PC-9 (cell line): ENCODE measurements at regions of chr16 and their contacts with region 1.

Region 1: GRCh38 chr16:27639561-27640276 is 89.8 kb downstream of the KATNIP start:
- DNase-seq: peak in 1 of 2 experiments; percentile 23
- H3K4me3 ChIP-seq: no peak overlapping the region
- H3K27ac ChIP-seq: no peak overlapping the region
- H3K4me1 ChIP-seq: no peaks in the 10 kb centered on the region
- H3K27me3 ChIP-seq: no peaks in the 10 kb centered on the region
- CTCF ChIP-seq: peak; percentile 78

Region 2: DNA sequence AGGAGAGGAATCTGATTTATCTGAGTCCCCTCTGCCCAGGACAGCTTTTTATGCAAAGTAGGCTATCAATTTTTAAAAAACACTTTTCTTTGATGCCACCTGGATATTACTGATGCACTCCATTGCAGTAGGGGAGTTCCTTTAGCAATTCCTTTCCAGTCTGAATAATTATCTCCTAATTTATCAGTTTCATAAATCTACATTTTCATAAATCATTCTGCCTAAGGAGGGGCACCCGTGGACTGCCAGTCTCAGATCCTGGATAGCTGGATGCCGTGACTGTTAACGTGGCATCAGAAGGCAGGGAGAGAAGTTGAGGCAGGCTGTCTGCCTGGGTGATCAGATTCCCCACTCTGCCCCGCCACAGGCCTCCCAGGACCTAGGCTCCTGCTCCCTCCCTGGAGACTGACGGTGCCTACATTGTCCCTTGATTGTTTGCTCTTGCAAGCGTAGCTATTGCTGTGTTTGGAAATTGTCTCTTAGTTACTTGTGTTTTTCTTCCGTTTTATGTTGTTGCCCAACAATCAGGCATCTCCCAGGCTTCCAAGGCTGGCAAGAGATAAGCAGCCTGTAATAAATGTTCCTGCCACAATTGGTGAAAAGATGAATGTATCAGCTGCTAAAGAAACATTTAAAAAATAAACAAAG is 14.5 kb before region 1 on chr16:
- CTCF ChIA-PET with region 1: no interaction called
- POLR2A ChIA-PET with region 1: no interaction called
- intact Hi-C with region 1: no loop called
- DNase-seq: peak in 1 of 2 experiments; percentile 58
- H3K4me3 ChIP-seq: no peak overlapping the region
- H3K27ac ChIP-seq: no peak overlapping the region
- H3K4me1 ChIP-seq: no peaks in the 10 kb centered on the region
- H3K27me3 ChIP-seq: no peaks in the 10 kb centered on the region
- CTCF ChIP-seq: no peak

Region 3: DNA sequence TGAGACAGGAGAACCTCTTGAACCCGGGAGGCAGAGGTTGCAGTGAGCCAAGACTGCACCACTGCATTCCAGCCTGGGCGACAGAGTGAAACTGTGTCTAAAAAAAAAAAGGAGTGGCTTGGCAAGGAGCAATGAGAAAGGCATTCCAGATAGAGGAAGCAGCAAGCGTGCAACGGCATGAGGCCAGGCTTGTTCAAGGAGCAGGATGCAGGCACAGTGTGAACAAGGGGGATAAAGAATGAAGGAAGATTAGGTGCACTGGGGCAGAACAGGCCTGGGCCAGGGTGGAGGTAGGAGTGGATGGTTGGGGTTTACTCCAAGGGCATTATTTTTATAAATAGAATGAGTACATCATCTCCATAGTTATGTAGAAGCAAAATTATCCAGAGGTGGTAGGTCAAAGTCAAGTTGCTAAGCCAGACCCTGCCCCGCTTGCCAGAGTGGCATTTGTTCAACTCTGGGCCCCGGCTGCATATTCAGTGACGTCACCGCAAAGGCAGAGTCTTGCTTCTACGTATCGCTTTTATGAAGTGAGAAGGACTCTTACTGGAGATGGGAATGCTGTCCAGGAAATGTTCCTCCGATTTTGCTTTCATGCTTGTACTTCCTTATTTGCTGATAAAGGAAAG is 10.5 kb after region 1 on chr16:
- CTCF ChIA-PET with region 1: no interaction called
- POLR2A ChIA-PET with region 1: no interaction called
- intact Hi-C with region 1: no loop called
- DNase-seq: no peak
- H3K4me3 ChIP-seq: no peak overlapping the region
- H3K27ac ChIP-seq: no peak overlapping the region
- H3K4me1 ChIP-seq: no peaks in the 10 kb centered on the region
- H3K27me3 ChIP-seq: no peaks in the 10 kb centered on the region
- CTCF ChIP-seq: no peak

Region 4: DNA sequence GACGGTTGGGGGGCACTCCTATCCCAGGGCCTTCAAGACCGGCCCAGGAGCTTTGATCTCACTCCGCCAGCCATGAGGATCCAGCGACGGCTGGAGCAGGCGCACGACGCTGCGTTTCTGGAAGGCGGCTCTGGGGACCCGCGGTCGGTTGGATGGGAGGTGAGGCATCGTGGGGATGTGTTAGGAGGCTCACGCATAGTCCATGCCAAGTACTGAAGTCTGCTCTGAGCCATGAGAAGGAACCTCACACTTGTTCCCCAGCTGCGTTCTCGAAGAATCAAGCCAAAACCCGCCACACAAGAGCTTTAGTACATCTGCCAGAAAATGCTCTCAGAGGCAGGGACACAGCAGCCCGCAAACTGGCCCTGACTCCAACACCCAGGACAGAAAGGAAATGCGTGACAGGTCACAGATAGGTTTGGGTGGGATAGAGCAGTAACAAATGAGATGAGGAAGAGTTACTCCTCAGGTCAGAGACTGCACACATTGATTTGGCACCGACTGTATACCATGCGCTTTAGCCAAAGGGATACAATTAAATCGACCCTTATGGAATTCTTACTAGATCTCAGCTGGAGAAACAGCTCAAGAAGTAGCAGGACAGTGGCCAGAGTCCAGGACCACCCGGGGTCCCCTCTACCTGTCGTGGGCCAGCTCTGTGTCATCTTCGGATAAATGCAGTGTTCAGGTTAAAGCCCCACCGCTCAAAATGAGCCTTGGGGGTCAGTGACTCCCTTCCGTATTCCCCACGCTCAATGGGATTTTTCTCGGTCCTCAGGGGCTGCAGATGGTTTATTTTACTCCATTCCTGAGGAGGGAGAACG is 430.5 kb after region 1 on chr16:
- CTCF ChIA-PET with region 1: interaction called, 6 read pairs
- POLR2A ChIA-PET with region 1: no interaction called
- intact Hi-C with region 1: loop called (anchors 2 kb)
- DNase-seq: no peak
- H3K4me3 ChIP-seq: no peak overlapping the region
- H3K27ac ChIP-seq: no peak overlapping the region
- H3K4me1 ChIP-seq: no peaks in the 10 kb centered on the region
- H3K27me3 ChIP-seq: peaks cover 20% of the 10 kb centered on the region; the same call in 1 of the 2 replicates
- CTCF ChIP-seq: no peak